Natural killer cell (primary cell): ENCODE measurements at regions of chr6 and their contacts with region 1.

Region 1: DNA sequence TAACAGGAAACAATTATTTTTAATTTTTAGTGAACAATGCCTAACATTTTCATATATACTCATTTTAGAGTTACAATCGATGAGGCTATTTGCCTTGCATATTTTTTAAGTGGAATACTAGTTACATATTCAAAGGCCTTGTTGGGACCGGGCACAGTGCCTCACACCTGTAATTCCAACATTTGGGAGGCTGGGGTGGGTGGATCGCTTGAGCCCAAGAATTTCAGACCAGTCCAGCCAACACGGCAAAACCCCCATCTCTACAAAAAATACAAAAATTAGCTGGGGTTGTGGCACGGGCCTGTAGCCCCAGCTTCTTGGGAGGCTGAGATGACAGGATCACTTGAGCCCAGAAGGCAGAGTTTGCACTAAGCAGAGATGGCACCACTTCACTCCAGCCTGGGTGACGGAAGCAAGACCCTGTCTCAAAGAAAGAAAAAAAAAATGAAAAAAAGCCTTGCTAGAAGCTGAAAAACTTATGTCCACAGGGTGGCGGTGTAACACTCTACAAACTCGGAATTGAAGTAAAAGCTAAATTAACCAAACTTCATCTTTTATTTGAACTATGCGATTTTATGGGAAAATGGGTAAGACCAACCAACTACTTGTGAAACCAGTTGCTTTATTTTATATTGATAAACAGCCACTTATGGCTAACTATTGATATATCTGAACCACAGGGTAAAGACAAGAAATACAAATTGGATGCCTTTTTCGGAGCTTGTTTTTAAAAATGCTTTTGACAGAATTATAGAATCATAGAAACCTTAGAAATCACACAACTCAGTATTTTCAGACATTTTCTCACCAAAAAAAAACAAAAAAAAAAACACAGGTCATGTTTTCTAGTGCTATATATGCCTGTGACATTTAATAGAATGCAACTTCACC is 24.1 kb upstream of the ROS1 start:
- DNase-seq: peak; percentile 33 to 84
- ATAC-seq: peak in 2 of 3 donors; percentile 58 to 73
- H3K4me3 ChIP-seq: no peak overlapping the region
- H3K4me3 Mint-ChIP-seq: no peak overlapping the region
- H3K27ac ChIP-seq: no peak overlapping the region
- H3K27ac Mint-ChIP-seq: no peak overlapping the region
- H3K4me1 ChIP-seq: no peaks in the 10 kb centered on the region
- H3K4me1 Mint-ChIP-seq: no peaks in the 10 kb centered on the region
- H3K27me3 ChIP-seq: peaks cover 3% of the 10 kb centered on the region
- H3K27me3 Mint-ChIP-seq: peaks cover 18 to 27% of the 10 kb centered on the region in 2 donors
- CTCF ChIP-seq: peak; percentile 89

Region 2: DNA sequence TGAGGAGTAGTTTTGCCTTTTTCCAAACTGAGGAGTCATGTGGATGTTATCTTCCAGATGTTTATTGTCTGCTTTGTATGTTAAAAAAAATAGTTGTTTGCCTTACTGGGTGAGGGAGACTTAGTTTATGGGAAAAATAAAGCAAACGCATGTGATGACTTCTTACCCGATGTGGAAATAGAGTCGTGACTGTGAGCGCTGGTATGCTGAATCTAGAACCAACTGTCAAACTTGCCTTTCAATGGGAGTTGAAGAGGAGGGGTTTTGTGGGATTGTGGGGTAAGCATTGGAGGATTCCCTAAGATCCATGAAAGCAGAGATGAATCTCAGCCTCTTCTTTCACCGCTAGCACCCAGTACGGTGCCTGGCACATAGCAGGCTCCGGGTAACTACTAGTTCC is 38.0 kb after region 1 on chr6:
- intact Hi-C with region 1: loop called (anchors 5 kb)
- DNase-seq: no peak
- ATAC-seq: no peak
- H3K4me3 ChIP-seq: no peak overlapping the region
- H3K4me3 Mint-ChIP-seq: no peak overlapping the region
- H3K27ac ChIP-seq: no peak overlapping the region
- H3K27ac Mint-ChIP-seq: no peak overlapping the region
- H3K4me1 ChIP-seq: peaks cover 8% of the 10 kb centered on the region
- H3K4me1 Mint-ChIP-seq: peaks cover 11 to 20% of the 10 kb centered on the region in 2 donors
- H3K27me3 ChIP-seq: no peaks in the 10 kb centered on the region
- H3K27me3 Mint-ChIP-seq: no peaks in the 10 kb centered on the region
- CTCF ChIP-seq: no peak

Region 3: GRCh38 chr6:117555882-117556498 is 106.2 kb after region 1 on chr6:
- intact Hi-C with region 1: loop called (anchors 1 kb)
- DNase-seq: peak; percentile 42 to 78
- ATAC-seq: peak in 2 of 3 donors; percentile 49 to 58
- H3K4me3 ChIP-seq: no peak overlapping the region
- H3K4me3 Mint-ChIP-seq: no peak overlapping the region
- H3K27ac ChIP-seq: no peak overlapping the region
- H3K27ac Mint-ChIP-seq: no peak overlapping the region
- H3K4me1 ChIP-seq: no peaks in the 10 kb centered on the region
- H3K4me1 Mint-ChIP-seq: peaks cover 2 to 6% of the 10 kb centered on the region in 2 donors
- H3K27me3 ChIP-seq: no peaks in the 10 kb centered on the region
- H3K27me3 Mint-ChIP-seq: no peaks in the 10 kb centered on the region
- CTCF ChIP-seq: peak; percentile 93